GM10248 (cell line): ENCODE measurements at regions of chr7 and their contacts with region 1.

Region 1: GRCh38 chr7:90455163-90456030 is 14.0 kb upstream of the PTTG1IP2 start:
- DNase-seq: peak; percentile 48
- CTCF ChIP-seq: peak; percentile 65

Region 2: GRCh38 chr7:90320801-90321494 is 134.4 kb before region 1 on chr7 and contains the start of gene FAM237B:
- CTCF ChIA-PET with region 1: no interaction called
- POLR2A ChIA-PET with region 1: no interaction called
- DNase-seq: no peak
- CTCF ChIP-seq: no peak

Region 3: DNA sequence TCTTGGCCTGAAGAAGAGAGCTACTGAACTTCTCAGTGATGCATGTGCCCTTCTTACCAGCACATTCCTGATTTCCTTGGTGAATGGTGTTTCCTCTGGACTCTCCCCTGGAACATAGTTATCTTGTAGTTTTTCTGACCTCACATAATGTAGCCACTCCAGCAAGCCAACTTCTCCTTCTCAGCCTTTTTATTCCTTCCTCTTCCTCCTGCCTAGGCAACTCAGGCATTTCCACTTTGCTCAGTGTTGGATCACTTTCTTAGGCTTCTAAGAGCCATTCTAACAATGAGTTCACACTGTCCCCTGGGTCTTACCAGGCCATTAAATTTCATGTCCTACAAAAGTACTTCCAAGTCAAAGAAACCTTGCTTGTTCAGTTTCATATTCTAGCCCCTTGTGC is 10.4 kb after region 1 on chr7:
- CTCF ChIA-PET with region 1: interaction called, 27 read pairs
- POLR2A ChIA-PET with region 1: no interaction called
- DNase-seq: no peak
- CTCF ChIP-seq: no peak

Region 4: DNA sequence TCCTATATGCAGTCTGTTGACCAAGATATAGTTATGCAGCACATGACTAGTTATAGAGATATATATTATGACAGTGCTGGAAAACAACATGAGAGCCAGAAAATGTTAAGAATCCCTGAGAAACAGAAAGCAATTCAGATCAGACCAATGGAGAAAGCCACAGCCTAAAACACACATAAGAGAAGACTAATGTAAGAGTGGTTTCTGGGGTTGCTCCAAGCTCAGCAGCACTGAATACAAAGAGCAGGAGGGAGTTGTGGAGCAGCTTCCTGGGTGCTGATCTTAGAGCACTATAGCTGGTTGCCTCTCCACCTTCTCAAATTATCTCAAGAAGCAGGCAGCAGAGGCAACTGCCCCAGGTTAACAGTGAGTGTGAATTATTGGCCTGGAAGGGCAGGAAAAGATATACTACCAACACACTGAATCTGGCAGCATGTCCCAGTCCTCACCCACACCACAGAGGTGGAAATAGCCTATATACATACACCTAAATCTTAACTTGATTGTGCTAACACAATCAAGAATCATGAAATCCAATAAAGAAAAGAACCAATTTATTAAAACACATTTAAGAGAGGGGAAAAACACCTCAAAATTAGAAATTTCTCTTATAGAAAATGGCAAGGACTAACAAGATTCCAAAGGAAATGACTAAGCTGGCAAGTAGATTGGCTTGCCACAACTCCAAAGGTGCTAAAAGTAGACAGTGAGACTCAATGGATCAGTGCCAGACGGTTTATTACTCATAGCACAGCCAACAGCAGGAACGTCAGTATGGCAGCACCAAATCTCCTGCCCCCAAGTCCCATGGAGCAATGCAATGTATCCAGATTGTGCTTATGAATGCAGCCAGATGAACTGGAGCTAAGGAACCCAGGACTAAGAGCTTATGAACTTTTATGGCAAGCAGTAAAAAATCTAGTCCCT is 19.1 kb after region 1 on chr7:
- CTCF ChIA-PET with region 1: interaction called, 27 read pairs
- POLR2A ChIA-PET with region 1: no interaction called
- DNase-seq: no peak
- CTCF ChIP-seq: no peak

Region 5: GRCh38 chr7:90495256-90495655 is 39.9 kb after region 1 on chr7:
- CTCF ChIA-PET with region 1: no interaction called
- POLR2A ChIA-PET with region 1: no interaction called
- DNase-seq: no peak
- CTCF ChIP-seq: no peak